GM10248 (cell line): ENCODE measurements at regions of chr19 and their contacts with region 1.

Region 1: DNA sequence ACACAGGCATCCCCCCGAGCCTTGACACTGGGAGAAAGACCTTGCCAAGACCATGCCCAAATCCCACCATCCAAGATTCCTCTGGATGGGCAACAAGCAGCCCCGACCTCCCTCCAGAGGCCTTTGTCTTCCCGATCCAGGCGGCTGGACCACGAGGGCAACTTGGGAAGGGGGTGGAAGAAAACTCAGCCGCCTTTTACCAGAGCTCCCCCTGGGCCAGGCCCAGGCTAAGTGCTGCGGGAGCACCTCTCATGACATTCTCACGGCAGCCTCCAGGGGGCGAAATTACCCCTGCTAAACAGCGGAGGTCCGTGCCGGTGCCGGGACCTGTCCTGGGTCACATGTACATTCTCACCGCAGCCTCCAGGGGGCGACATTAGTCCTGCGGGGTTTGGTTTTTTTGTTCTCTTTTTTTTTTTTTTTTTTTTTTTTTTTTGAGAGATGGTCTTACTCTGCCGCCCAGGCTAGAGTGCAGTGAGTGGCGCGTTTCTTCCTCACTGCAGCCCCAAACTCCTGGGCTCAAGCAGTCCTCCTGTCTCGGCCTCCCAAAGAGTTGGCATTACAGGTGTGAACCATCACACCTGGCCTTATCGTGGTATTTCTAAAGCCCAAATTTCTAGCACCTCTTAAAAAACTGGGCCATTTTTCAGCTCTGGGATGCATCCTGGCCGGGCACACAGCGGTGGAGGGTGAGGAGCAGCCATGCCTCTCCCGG is 2.1 kb upstream of the RSPH6A start:
- DNase-seq: peak; percentile 99
- CTCF ChIP-seq: peak; percentile 96

Region 2: GRCh38 chr19:45792470-45793177 is 24.5 kb before region 1 on chr19 and contains the start of gene DMWD:
- CTCF ChIA-PET with region 1: interaction called, 113 read pairs
- POLR2A ChIA-PET with region 1: interaction called, 3 read pairs
- DNase-seq: peak; percentile 99
- CTCF ChIP-seq: no peak

Region 3: GRCh38 chr19:45834970-45835369 is 17.8 kb after region 1 on chr19:
- CTCF ChIA-PET with region 1: interaction called, 63 read pairs
- POLR2A ChIA-PET with region 1: no interaction called
- DNase-seq: no peak
- CTCF ChIP-seq: no peak

Region 4: DNA sequence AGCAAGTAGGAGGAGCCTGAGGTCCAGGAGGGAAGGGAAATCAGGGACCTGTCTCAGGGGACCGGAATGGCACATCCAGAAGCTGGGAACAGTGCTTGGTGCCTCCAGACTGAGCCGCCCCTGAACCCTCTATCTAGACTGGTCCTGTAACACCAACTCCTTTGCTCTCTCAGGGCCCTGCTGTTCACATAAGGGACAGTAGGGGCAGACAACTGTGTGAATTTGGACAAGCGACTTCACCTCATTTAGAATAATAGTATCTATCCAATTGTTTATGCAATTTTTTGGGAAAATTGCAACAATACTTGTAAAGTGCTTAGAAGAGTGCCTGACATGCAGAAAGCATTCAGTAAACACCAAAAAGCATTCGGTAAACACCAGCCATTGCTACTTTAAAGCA is 31.8 kb after region 1 on chr19:
- CTCF ChIA-PET with region 1: interaction called, 15 read pairs
- POLR2A ChIA-PET with region 1: no interaction called
- DNase-seq: no peak
- CTCF ChIP-seq: peak; percentile 19

Region 5: GRCh38 chr19:45886427-45887199 is 69.4 kb after region 1 on chr19:
- CTCF ChIA-PET with region 1: interaction called, 20 read pairs
- POLR2A ChIA-PET with region 1: no interaction called
- DNase-seq: peak; percentile 90
- CTCF ChIP-seq: no peak

Region 6: GRCh38 chr19:46404055-46404752 is 587.0 kb after region 1 on chr19:
- CTCF ChIA-PET with region 1: no interaction called
- POLR2A ChIA-PET with region 1: no interaction called
- DNase-seq: no peak
- CTCF ChIP-seq: no peak